ENCODE measurements at regions of chr18 and their contacts with region 1.

Region 1: DNA sequence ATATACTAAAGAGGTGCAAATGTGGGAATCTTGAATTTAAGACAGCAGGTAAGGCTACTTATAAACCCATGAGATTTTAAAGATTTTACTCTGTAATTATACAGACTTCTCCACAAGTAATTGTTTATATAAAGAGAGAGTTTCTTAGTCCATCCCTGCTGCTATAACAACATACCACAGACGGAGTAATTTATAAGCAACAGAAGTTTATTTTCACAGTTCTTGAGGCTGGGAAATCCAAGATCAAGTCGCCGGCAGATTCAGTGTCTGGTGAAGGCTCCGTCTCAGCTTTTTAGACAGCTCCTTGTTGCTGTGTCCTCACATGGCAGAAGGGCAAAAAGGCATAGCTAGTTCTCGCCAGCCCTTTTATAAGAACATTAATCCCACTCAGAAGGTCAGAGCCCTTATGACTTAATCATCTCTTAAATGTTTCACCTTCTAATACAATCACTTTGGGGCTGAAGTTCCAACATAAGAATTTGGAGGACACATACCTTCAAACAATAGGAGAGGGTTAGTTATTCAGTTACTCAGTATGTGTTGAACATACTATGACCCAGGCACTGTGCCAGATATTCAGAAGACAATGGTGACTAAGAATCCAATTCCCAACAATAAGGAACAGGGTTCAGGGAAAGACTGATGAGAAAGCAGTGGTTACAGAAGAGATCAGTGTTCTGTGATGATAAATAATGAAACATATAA is 466.0 kb downstream of the RIT2 start:
- DNase-seq: no peak
- ATAC-seq: no peak
- H3K4me3 Mint-ChIP-seq: no peak overlapping the region
- H3K27ac Mint-ChIP-seq: no peak overlapping the region
- H3K4me1 Mint-ChIP-seq: peaks cover 46% of the 10 kb centered on the region
- H3K27me3 Mint-ChIP-seq: no peaks in the 10 kb centered on the region; the same call in 1 of the 2 replicates
- CTCF ChIP-seq: no peak

Region 2: DNA sequence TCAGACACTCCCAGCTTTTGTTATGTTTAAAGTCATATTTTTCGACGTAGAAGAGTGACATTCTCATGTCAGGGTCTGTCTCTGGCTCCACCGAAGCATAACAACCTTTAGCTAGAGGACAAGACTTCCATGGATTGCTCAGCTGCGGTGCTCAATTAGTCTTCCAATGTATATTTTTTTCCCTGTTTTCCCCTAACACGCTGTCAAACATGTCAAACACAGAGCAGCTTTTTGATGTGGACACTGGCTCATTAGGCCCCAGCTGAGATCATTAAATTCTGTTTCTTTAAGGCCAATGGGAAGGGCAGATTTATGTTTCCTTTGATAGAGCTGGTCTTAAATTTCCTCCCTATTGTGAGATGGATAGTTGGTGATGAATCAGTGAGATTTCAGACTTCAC is 169.0 kb before region 1 on chr18:
- CTCF ChIA-PET with region 1: no interaction called
- POLR2A ChIA-PET with region 1: no interaction called
- DNase-seq: no peak
- ATAC-seq: no peak
- H3K4me3 Mint-ChIP-seq: no peak overlapping the region
- H3K27ac Mint-ChIP-seq: no peak overlapping the region
- H3K4me1 Mint-ChIP-seq: no peaks in the 10 kb centered on the region
- H3K27me3 Mint-ChIP-seq: no peaks in the 10 kb centered on the region; the same call in 1 of the 2 replicates
- CTCF ChIP-seq: no peak

Region 3: GRCh38 chr18:42578781-42579180 is 70.7 kb before region 1 on chr18:
- CTCF ChIA-PET with region 1: no interaction called
- POLR2A ChIA-PET with region 1: no interaction called
- DNase-seq: no peak
- ATAC-seq: no peak
- H3K4me3 Mint-ChIP-seq: no peak overlapping the region
- H3K27ac Mint-ChIP-seq: no peak overlapping the region
- H3K4me1 Mint-ChIP-seq: peaks cover 28% of the 10 kb centered on the region
- H3K27me3 Mint-ChIP-seq: no peaks in the 10 kb centered on the region
- CTCF ChIP-seq: no peak

Region 4: GRCh38 chr18:42611134-42611533 is 38.3 kb before region 1 on chr18:
- CTCF ChIA-PET with region 1: no interaction called
- POLR2A ChIA-PET with region 1: interaction called, 10 read pairs
- DNase-seq: no peak
- ATAC-seq: no peak
- H3K4me3 Mint-ChIP-seq: no peak overlapping the region
- H3K27ac Mint-ChIP-seq: no peak overlapping the region
- H3K4me1 Mint-ChIP-seq: no peaks in the 10 kb centered on the region
- H3K27me3 Mint-ChIP-seq: no peaks in the 10 kb centered on the region
- CTCF ChIP-seq: no peak

Region 5: GRCh38 chr18:42683094-42683493 is 33.6 kb after region 1 on chr18:
- CTCF ChIA-PET with region 1: no interaction called
- POLR2A ChIA-PET with region 1: no interaction called
- DNase-seq: no peak
- ATAC-seq: no peak
- H3K4me3 Mint-ChIP-seq: no peak overlapping the region
- H3K27ac Mint-ChIP-seq: no peak overlapping the region
- H3K4me1 Mint-ChIP-seq: no peaks in the 10 kb centered on the region
- H3K27me3 Mint-ChIP-seq: no peaks in the 10 kb centered on the region
- CTCF ChIP-seq: no peak